GM18951 (cell line): ENCODE measurements at regions of chr20 and their contacts with region 1.

Region 1: DNA sequence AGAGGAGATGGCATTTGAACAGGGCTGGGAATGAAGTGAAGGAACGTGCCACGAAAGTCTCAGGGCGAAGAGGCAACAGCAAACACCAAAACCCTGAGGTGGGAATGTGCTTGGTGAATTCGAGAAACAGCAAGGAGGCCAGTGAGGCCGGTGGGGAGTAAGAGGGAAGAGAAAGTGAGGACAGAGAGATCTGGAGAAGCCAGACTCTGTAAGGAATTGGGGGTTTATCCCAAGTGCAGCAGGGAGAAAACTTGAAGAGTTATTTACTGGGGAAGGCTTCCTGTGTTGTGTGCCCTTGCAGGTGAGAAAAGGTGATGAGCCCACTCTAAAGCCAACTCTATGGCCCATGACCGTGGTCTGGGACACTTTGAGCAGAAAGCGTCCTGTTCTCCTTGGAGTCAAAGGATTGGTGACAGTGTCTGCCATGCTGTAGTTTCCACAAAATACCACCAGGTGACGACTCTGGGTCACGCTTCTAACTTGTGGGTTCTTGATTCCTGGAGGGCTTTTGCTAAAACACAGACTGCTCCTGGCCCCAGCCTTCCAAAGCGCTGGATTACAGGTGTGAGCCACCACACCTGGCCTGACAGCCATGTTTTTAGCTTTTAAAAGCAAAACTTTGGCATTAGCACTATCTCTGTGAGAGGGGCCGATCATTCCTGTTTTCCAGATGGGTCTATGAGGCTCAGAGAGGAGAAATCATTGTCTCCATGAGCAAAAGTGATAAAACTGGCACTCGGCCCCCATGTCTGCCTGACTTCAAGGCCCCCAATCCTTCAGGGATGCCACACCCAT is 18.0 kb upstream of the CSNK2A1 start:
- POLR2A ChIP-seq: no peak

Region 2: GRCh38 chr20:653110-653589 is 91.5 kb after region 1 on chr20 and contains the start of gene SRXN1:
- in situ Hi-C with region 1: loop called (anchors 5 kb)
- POLR2A ChIP-seq: peak; percentile 81